ENCODE measurements at regions of chr6 and their contacts with region 1.

Region 1: GRCh38 chr6:108947114-108947854 is 99.1 kb downstream of the ARMC2 start:
- DNase-seq: no peak
- H3K4me3 ChIP-seq: no peak overlapping the region
- H3K27ac ChIP-seq: peak overlapping the region; percentile 83 to 93 (median 86)
- H3K4me1 ChIP-seq: peaks cover 0 to 79% (median 61%) of the 10 kb centered on the region in 4 donors
- H3K27me3 ChIP-seq: no peaks in the 10 kb centered on the region
- CTCF ChIP-seq: no peak
- EP300 ChIP-seq: no peak
- POLR2A ChIP-seq: no peak

Region 2: DNA sequence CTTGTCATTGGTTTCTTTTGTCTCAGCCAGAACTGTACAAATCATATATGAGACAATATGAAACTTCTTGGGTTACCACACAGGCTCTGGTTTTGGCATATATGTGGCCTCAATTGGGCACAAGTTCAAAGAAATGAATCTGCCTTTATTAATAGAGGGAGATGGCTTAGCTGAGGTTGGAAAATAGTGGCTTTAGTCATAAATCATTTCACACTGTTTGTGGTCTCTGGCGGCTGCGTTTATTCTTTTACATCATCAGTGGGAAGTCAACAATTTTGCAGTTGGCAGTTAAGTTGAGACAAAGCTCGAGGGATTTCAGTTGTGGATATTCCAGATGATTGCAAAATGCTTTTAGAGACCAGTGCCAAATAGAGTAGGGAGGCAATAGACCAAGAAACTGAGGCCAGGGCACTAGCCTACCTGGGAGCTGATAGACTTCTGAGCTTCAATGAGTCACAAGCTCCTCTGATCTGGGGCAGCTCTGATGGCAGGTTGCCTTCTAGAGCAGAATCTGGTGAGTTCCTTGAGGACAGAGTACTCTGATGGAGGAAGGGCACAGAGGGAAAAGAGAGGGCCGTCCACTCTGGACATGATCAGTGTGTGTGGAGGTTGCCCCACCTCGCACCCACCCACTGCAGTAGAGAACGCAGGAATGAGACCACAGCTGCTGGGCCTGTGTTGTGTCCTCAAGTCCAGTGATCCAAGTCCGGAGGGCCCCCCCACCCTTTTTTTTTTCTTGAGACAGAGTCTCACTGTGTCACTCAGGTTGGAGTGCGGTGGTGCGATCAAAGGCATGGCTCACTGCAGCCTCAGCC is 25.5 kb before region 1 on chr6:
- intact Hi-C with region 1: loop called (anchors 2 kb)
- DNase-seq: peak; percentile 78
- H3K4me3 ChIP-seq: no peak overlapping the region
- H3K27ac ChIP-seq: peak overlapping the region in 3 of 4 donors; percentile 27 to 71 (median 60)
- H3K4me1 ChIP-seq: peaks cover 0 to 19% (median 18%) of the 10 kb centered on the region in 4 donors
- H3K27me3 ChIP-seq: no peaks in the 10 kb centered on the region
- CTCF ChIP-seq: no peak
- EP300 ChIP-seq: peak in 1 of 4 donors; percentile 17
- POLR2A ChIP-seq: no peak

Region 3: GRCh38 chr6:108966855-108967755 is 19.8 kb after region 1 on chr6:
- intact Hi-C with region 1: no loop called
- DNase-seq: no peak
- H3K4me3 ChIP-seq: no peak overlapping the region
- H3K27ac ChIP-seq: no peak overlapping the region
- H3K4me1 ChIP-seq: peaks cover 0 to 6% (median 3%) of the 10 kb centered on the region in 4 donors
- H3K27me3 ChIP-seq: no peaks in the 10 kb centered on the region
- CTCF ChIP-seq: no peak
- EP300 ChIP-seq: no peak
- POLR2A ChIP-seq: no peak

Region 4: DNA sequence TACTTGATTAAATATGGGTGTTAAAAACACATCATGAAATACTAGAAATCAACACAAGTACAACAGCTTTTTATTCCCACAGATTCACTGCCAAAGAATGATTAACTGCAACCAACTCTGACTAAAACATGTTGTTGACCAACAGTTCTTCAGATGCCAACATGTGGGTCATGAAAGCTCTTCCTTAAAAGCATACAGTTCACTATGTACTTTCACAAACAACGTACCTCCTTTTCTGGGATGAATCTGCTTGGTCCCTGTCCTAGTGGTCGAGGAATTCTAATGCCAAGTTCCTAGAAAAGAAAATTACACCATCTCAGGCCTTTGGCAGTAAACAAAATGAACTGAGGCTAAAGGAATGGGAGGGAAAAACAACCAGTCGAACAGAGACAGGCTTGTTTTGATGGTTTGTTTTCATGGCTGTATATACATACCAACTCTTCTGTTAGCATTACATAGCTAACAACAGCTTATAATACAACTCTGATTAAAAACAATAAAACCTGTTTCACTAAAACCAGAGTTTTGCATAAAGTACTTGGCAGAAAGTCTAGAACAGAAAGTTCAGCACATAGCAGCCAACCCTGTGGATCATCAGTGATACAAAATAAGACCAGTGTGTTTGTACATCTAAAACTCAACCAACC is 54.9 kb after region 1 on chr6:
- intact Hi-C with region 1: loop called (anchors 2 kb)
- DNase-seq: no peak
- H3K4me3 ChIP-seq: peak overlapping the region; percentile 0 to 23 (median 4)
- H3K27ac ChIP-seq: peak overlapping the region; percentile 73 to 86 (median 78)
- H3K4me1 ChIP-seq: peaks cover 0 to 85% (median 56%) of the 10 kb centered on the region in 4 donors
- H3K27me3 ChIP-seq: no peaks in the 10 kb centered on the region
- CTCF ChIP-seq: no peak
- EP300 ChIP-seq: peak in 3 of 4 donors; percentile 74 to 92 (median 74)
- POLR2A ChIP-seq: no peak

Region 5: GRCh38 chr6:109009236-109009961 is 62.1 kb after region 1 on chr6:
- intact Hi-C with region 1: loop called (anchors 2 kb)
- DNase-seq: peak; percentile 97
- H3K4me3 ChIP-seq: peak overlapping the region; percentile 93 to 98 (median 97)
- H3K27ac ChIP-seq: peak overlapping the region; percentile 92 to 98 (median 96)
- H3K4me1 ChIP-seq: peaks cover 0 to 47% (median 35%) of the 10 kb centered on the region in 4 donors
- H3K27me3 ChIP-seq: no peaks in the 10 kb centered on the region
- CTCF ChIP-seq: peak in 1 of 4 experiments; percentile 27
- EP300 ChIP-seq: no peak
- POLR2A ChIP-seq: peak; percentile 59 to 63